Activated naive CD4-positive, alpha-beta T cell treated with anti-CD3 and anti-CD28 coated beads for 36 hours (primary cell): ENCODE measurements at regions of chr1 and their contacts with region 1.

Region 1: DNA sequence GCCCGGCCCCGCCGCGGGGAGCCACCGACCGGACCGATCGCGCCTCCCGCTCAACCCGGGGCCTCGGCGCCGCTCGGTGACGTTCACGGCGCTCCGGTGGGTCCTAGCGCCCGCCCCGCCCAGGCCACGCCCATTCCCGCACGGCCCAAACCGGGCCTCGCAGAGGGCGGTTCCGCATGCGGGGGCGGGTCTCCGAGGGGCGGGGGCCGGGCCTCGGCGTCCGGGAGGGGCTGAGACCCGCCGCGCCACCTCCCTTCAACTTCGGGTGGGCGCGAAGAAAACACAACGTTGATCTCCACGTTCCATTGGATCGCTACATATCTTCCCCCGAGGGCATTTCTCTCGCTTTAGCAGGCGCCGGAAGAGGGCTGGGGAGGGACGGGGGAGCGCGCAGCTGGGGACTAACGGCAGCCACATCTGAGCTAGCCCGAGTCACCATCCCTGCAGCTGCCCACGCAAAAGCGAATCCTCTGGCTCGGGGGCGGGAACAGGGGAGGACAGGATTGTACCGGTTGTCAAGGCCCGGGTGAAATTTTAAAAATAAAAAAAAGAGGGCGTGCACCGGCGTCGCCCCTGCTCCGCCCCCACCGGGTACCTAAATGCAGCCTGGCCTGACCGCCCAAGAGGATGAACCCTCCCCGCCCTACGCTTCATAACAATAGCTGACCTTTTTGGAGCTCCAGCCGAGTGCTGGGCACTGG is at the start of gene MAD2L2:
- DNase-seq: peak; percentile 92
- H3K4me3 Mint-ChIP-seq: peak within 1 kb of the TSS; percentile 85
- H3K27ac Mint-ChIP-seq: peak within 1 kb of the TSS; percentile 88
- H3K4me1 Mint-ChIP-seq: peaks cover 10% of the 10 kb centered on the region
- H3K27me3 Mint-ChIP-seq: no peaks in the 10 kb centered on the region
- total RNA-seq, gene MAD2L2: 86.7 to 88.3 TPM

Region 2: DNA sequence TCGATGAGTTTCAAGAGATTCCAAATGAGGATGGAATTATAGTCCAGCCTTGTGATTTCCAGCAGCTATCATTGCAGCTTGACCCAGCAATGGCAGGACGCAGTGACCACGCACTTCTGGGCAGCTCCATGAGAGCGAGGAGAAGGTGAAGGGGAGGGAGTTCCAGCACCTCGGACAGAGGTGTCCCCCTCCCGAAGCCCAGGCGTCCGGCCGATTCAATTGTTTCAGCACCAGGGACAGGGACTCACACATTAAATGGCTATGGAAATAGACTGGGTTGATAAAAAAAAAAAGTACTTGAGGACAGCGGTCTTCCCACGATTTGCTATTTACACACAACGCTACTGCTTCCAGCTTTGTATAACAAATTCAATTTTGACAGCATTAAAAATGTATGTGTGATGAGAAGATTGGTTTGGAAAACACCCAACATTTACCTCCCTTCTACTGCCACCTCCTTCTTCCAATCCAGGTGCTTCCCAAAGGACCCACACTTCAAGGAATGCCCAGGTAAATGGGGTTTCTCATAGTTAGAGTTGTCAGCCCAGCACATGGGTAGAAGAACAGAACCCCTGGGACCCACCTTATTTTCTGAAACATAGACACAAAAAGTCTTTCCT is 130.4 kb before region 1 on chr1:
- CTCF ChIA-PET with region 1: no interaction called
- intact Hi-C with region 1: no loop called
- DNase-seq: peak; percentile 70
- H3K4me3 Mint-ChIP-seq: no peak overlapping the region
- H3K27ac Mint-ChIP-seq: no peak overlapping the region
- H3K4me1 Mint-ChIP-seq: no peaks in the 10 kb centered on the region
- H3K27me3 Mint-ChIP-seq: peaks cover 37% of the 10 kb centered on the region

Region 3: GRCh38 chr1:11654137-11654938 is 26.9 kb before region 1 on chr1 and contains the starts of genes FBXO2 and FBXO44:
- CTCF ChIA-PET with region 1: interaction called, 6 read pairs
- intact Hi-C with region 1: loop called (anchors 2 kb)
- DNase-seq: peak; percentile 64
- H3K4me3 Mint-ChIP-seq: peak within 1 kb of the TSS; percentile 75
- H3K27ac Mint-ChIP-seq: no peak within 1 kb of the TSS
- H3K4me1 Mint-ChIP-seq: peaks cover 24% of the 10 kb centered on the region
- H3K27me3 Mint-ChIP-seq: no peaks in the 10 kb centered on the region
- total RNA-seq, gene FBXO2: 0.77 to 1.1 TPM
- total RNA-seq, gene FBXO44: 21.6 to 23.6 TPM

Region 4: GRCh38 chr1:11735854-11736745 is 54.9 kb after region 1 on chr1 and contains the start of gene AGTRAP:
- CTCF ChIA-PET with region 1: interaction called, 3 read pairs
- intact Hi-C with region 1: loop called (anchors 5 kb)
- DNase-seq: peak; percentile 92
- H3K4me3 Mint-ChIP-seq: peak within 1 kb of the TSS; percentile 96
- H3K27ac Mint-ChIP-seq: peak within 1 kb of the TSS; percentile 93
- H3K4me1 Mint-ChIP-seq: peaks cover 51% of the 10 kb centered on the region
- H3K27me3 Mint-ChIP-seq: no peaks in the 10 kb centered on the region
- total RNA-seq, gene AGTRAP: 20.3 to 21.7 TPM

Region 5: GRCh38 chr1:12095452-12096263 is 414.4 kb after region 1 on chr1:
- CTCF ChIA-PET with region 1: no interaction called
- intact Hi-C with region 1: no loop called
- DNase-seq: no peak
- H3K4me3 Mint-ChIP-seq: no peak overlapping the region
- H3K27ac Mint-ChIP-seq: no peak overlapping the region
- H3K4me1 Mint-ChIP-seq: peaks cover 1% of the 10 kb centered on the region
- H3K27me3 Mint-ChIP-seq: no peaks in the 10 kb centered on the region